Activated CD8-positive, alpha-beta T cell treated with anti-CD3 and anti-CD28 coated beads, Interleukin-2, amount 10 ng/mL, durations not matched to agents 7 days and 5 days (primary cell): ENCODE measurements at regions of chr20 and their contacts with region 1.

Region 1: DNA sequence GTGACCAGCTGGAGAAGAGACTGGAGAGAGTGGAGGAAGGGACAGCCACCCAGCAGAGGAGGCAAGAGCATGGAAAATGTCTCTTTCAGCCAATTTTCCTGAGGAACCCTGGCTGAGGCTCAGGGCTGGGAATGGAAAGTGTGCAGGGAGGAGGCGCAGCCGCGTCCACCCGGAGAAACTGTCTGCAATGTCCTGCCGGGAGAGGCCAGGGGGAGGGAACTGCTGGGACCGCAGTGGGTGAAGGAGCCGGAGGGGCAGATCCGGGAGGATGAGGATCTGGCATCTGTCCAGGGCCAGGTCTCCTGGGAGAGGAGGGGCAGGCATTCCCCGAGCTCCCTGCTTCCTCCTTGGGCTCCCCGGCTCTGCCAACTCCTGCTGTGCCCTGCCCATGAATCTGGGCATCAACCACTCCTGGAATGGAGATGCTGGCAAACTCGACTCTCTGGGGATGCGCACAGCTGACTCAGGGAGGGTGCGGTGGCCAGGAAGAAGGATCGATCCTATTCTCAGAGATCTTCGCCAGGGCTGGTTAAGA is 17.4 kb upstream of the HM13 start:
- DNase-seq: no peak
- ATAC-seq: no peak
- H3K4me3 Mint-ChIP-seq: no peak overlapping the region
- H3K27ac Mint-ChIP-seq: no peak overlapping the region
- H3K4me1 Mint-ChIP-seq: no peaks in the 10 kb centered on the region
- H3K27me3 Mint-ChIP-seq: peaks cover 18% of the 10 kb centered on the region

Region 2: GRCh38 chr20:31452575-31452974 is 44.3 kb before region 1 on chr20:
- CTCF ChIA-PET with region 1: interaction called, 87 read pairs
- POLR2A ChIA-PET with region 1: no interaction called
- DNase-seq: no peak
- ATAC-seq: no peak
- H3K4me3 Mint-ChIP-seq: no peak overlapping the region
- H3K27ac Mint-ChIP-seq: no peak overlapping the region
- H3K4me1 Mint-ChIP-seq: no peaks in the 10 kb centered on the region
- H3K27me3 Mint-ChIP-seq: peaks cover 2% of the 10 kb centered on the region

Region 3: DNA sequence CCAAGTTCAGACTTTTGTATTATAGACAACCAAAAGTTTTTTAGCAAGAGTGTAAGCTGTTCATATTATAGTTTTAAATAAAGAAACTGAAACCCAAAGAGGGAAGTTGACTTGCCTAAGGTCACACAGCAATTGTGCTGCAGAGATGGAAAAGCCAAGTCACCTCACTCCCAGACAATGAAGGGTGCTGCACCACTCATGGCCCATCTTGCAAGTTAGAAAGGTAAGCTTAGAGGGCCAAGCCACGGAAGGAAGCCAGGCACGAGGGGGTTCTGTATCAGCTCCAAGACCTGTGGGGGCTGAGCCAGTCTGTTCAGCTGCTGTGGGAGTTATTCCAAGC is 22.8 kb before region 1 on chr20:
- CTCF ChIA-PET with region 1: no interaction called
- POLR2A ChIA-PET with region 1: no interaction called
- DNase-seq: no peak
- ATAC-seq: no peak
- H3K4me3 Mint-ChIP-seq: no peak overlapping the region
- H3K27ac Mint-ChIP-seq: no peak overlapping the region
- H3K4me1 Mint-ChIP-seq: peaks cover 3% of the 10 kb centered on the region
- H3K27me3 Mint-ChIP-seq: peaks cover 40% of the 10 kb centered on the region

Region 4: DNA sequence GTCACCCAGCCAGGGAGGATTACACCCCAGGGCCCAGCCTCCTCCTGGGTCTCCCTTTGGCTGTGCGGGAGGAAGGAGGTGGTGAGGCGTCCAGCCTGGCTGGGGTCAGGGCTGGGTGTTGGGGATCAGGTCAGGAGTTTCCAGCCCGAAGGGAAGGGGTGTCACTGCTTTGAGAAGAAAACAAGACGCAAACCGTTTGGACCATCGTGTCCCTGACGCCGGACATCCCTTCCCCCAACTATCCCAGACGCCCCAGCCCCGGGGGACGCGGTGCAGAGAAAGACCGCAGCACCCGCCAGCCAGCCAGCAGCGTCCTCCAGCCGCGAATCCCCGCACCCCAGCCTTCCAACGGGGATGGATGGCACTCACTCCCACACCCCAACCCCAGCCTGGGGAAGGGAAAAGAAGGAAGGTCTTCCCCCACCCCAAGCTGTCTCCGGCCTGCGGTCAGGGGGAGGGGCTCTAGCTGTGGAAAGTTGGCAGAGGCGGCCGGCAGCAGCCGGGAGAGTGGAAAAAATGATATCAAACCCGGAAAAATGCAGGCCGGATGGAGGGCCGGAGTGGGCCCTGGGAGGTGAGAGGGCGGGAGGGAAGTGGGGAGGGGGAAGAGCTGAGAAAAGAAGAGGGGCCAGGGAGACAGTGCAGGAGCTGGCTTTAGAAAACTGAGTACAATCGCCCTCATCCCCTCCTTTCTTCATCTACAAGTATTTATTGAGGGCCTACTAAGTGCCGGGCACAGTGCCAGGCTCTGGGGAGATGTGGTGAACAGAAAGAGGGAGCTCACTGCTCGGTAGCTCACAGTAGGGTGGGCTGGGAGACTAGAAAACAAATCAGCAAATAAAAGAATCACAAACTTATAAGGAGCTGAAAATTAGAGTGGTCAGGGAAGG is 11.1 kb before region 1 on chr20:
- CTCF ChIA-PET with region 1: interaction called, 32 read pairs
- POLR2A ChIA-PET with region 1: no interaction called
- DNase-seq: no peak
- ATAC-seq: no peak
- H3K4me3 Mint-ChIP-seq: no peak overlapping the region
- H3K27ac Mint-ChIP-seq: no peak overlapping the region
- H3K4me1 Mint-ChIP-seq: no peaks in the 10 kb centered on the region
- H3K27me3 Mint-ChIP-seq: peaks cover 31% of the 10 kb centered on the region

Region 5: GRCh38 chr20:31514159-31515071 is 17.6 kb after region 1 on chr20 and contains the start of gene HM13:
- CTCF ChIA-PET with region 1: interaction called, 20 read pairs
- POLR2A ChIA-PET with region 1: no interaction called
- DNase-seq: peak; percentile 91
- ATAC-seq: peak; percentile 81
- H3K4me3 Mint-ChIP-seq: no peak within 1 kb of the TSS
- H3K27ac Mint-ChIP-seq: peak within 1 kb of the TSS; percentile 14
- H3K4me1 Mint-ChIP-seq: peaks cover 9% of the 10 kb centered on the region
- H3K27me3 Mint-ChIP-seq: no peaks in the 10 kb centered on the region
- total RNA-seq, gene HM13: 117 to 127 TPM